ENCODE measurements at regions of chr6 and their contacts with region 1.

Region 1: GRCh38 chr6:161422710-161423670 is 149.1 kb upstream of the AGPAT4 start:
- DNase-seq: peak; percentile 61
- H3K4me3 ChIP-seq: no peak overlapping the region
- H3K27ac ChIP-seq: no peak overlapping the region
- H3K4me1 ChIP-seq: peaks cover 6% of the 10 kb centered on the region
- H3K27me3 ChIP-seq: no peaks in the 10 kb centered on the region
- CTCF ChIP-seq: no peak
- POLR2A ChIP-seq: no peak

Region 2: DNA sequence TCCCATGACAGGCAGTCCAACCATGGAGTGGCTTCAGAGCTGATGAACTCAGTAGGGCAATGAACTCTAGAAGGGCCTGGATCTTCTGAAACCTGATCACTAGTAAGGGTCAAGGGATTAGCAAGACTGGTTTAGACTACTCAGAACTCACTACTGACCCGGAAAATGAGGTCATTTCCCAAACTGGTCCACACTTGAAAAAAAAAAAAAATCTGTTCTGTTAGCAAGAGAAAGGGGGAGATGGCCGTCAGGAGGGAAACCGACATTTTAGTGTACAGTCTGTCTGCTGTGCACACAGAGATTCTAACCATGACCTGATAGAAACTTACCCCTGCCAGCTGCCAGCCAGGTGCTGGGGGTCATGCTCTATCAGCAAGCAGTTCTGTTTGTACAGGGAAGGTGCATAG is 113.2 kb after region 1 on chr6:
- intact Hi-C with region 1: no loop called
- DNase-seq: no peak
- H3K4me3 ChIP-seq: no peak overlapping the region
- H3K27ac ChIP-seq: no peak overlapping the region
- H3K4me1 ChIP-seq: no peaks in the 10 kb centered on the region
- H3K27me3 ChIP-seq: no peaks in the 10 kb centered on the region
- CTCF ChIP-seq: no peak
- POLR2A ChIP-seq: no peak

Region 3: DNA sequence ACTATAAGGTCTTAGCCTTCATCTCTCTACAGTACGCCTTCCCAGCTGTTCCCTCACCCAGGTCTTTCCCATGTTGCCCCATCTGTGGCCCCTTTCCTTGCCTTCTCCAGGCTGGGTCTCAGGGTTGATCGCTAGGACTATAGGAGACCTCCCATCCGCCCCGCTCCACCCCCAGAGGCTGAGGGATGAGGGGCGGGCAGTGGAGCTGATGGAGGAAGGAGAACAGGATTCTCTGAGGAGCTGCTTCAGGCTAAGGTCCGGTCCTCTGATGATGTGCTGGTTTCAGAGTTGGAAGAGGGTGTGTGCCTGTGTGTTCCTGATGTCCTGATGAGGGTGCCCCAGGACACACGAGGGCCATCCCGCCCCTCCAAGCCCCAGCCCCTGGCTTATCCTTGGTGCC is 1836.7 kb after region 1 on chr6:
- intact Hi-C with region 1: loop called (anchors 5 kb)
- DNase-seq: no peak
- H3K4me3 ChIP-seq: no peak overlapping the region
- H3K27ac ChIP-seq: peak overlapping the region; percentile 53 to 70
- H3K4me1 ChIP-seq: peaks cover 43% of the 10 kb centered on the region
- H3K27me3 ChIP-seq: no peaks in the 10 kb centered on the region
- CTCF ChIP-seq: no peak
- POLR2A ChIP-seq: no peak

Measured in testis (tissue), 5 donors.